CD4-positive, alpha-beta T cell (primary cell): ENCODE measurements at regions of chr15 and their contacts with region 1.

Region 1: DNA sequence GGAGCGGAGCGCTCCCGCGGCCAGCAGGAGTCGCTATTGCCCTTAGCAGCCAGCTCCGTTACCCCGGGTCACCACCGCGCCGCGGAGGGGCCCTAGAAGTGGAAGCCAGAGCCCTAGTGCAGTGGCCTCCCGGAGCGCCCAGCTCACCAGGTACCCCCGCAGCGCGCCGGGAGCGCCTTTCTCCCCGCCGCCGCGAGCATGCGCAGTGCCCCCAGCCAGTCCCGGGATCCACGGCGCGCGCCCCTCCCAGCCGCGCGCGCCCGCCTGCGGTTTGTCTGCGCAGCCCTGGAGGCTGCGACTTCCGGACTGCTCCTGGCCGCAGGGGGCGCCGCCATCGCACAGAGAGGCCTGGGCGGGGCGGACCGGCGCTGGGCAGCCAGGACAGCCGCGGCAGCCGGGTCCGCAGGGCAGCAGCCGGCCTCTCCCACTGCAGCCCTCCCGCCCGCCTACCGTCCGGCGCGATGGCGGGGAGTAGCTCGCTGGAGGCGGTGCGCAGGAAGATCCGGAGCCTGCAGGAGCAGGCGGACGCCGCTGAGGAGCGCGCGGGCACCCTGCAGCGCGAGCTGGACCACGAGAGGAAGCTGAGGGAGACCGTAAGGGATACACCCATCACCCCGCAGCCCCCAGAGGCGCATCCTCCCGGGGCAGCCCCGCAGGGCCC is 5.7 kb downstream of the TPM1 start:
- DNase-seq: peak; percentile 71 to 95 (median 79)
- ATAC-seq: peak; percentile 75
- H3K4me3 ChIP-seq: peak overlapping the region; percentile 72
- H3K4me3 Mint-ChIP-seq: peak overlapping the region; percentile 98
- H3K27ac ChIP-seq: peak overlapping the region in 1 of 2 donors; percentile 31
- H3K27ac Mint-ChIP-seq: peak overlapping the region; percentile 80
- H3K4me1 ChIP-seq: peaks cover 27% of the 10 kb centered on the region
- H3K4me1 Mint-ChIP-seq: peaks cover 35% of the 10 kb centered on the region
- H3K27me3 ChIP-seq: peaks cover 26 to 40% of the 10 kb centered on the region in 2 experiments
- H3K27me3 Mint-ChIP-seq: peaks cover 46% of the 10 kb centered on the region
- CTCF ChIP-seq: peak; percentile 96

Region 2: DNA sequence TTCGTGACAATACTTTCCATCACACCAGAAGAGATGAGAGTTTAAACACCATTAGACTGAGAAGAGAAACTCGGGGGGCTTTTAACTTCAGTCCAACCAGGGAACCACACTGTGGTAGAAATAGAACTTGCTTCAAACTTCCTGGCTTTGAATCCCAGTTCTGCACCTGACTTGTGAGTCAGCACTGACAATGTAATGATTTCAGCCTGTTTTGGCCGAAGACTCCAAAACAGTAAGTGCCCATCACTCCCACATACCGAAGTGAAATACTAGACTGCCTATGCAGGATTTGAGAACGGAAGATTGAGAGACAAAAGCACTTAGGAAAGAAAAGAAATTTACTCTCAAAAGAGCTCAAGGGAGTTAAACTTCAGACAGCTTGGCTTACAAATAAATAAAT is 910.1 kb before region 1 on chr15:
- CTCF ChIA-PET with region 1: no interaction called
- POLR2A ChIA-PET with region 1: no interaction called
- intact Hi-C with region 1: no loop called
- DNase-seq: no peak
- ATAC-seq: no peak
- H3K4me3 ChIP-seq: no peak overlapping the region
- H3K4me3 Mint-ChIP-seq: no peak overlapping the region
- H3K27ac ChIP-seq: no peak overlapping the region
- H3K27ac Mint-ChIP-seq: no peak overlapping the region
- H3K4me1 ChIP-seq: no peaks in the 10 kb centered on the region
- H3K4me1 Mint-ChIP-seq: no peaks in the 10 kb centered on the region
- H3K27me3 ChIP-seq: no peaks in the 10 kb centered on the region
- H3K27me3 Mint-ChIP-seq: no peaks in the 10 kb centered on the region
- CTCF ChIP-seq: no peak

Region 3: DNA sequence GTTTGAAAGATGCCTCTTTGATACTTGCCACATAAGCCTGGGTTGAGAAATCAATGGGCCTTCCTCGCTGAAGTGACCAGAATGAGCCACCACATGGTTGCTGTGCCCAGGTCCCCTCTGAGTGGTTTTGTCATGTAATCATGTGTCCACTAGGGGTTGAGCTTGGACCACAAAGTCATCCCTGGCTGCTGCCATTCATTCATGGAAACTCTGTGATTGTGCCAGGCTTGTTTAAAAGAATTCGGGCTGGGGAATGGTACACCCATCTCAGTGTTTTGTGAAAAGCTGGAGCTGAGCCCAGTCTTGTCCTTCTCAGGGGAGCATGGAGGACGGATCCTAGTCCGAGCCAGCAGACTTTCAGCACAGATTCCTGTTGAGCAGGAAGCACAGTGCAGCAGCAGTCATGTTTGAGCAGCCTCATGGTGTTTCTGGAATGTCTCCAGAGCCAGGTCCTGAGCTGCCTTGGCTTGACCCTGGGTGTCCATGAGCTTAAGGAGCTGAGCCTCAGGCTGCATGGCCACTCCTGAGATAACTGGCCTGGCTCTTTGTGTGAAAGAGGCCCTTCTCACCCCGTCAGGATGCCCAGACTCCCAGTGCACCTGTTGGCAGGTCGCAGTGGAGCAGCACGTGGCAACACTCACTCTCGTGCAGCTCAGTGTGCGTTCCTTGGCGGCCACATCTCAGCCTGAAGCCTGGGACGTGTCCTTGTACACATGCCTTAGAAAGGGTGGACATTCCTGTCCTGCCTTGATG is 266.0 kb before region 1 on chr15:
- CTCF ChIA-PET with region 1: no interaction called
- POLR2A ChIA-PET with region 1: no interaction called
- intact Hi-C with region 1: no loop called
- DNase-seq: peak in 3 of 14 experiments; percentile 7 to 33 (median 19)
- ATAC-seq: no peak
- H3K4me3 ChIP-seq: no peak overlapping the region
- H3K4me3 Mint-ChIP-seq: no peak overlapping the region
- H3K27ac ChIP-seq: no peak overlapping the region
- H3K27ac Mint-ChIP-seq: no peak overlapping the region
- H3K4me1 ChIP-seq: no peaks in the 10 kb centered on the region
- H3K4me1 Mint-ChIP-seq: no peaks in the 10 kb centered on the region
- H3K27me3 ChIP-seq: no peaks in the 10 kb centered on the region
- H3K27me3 Mint-ChIP-seq: peaks cover 3% of the 10 kb centered on the region
- CTCF ChIP-seq: no peak

Region 4: DNA sequence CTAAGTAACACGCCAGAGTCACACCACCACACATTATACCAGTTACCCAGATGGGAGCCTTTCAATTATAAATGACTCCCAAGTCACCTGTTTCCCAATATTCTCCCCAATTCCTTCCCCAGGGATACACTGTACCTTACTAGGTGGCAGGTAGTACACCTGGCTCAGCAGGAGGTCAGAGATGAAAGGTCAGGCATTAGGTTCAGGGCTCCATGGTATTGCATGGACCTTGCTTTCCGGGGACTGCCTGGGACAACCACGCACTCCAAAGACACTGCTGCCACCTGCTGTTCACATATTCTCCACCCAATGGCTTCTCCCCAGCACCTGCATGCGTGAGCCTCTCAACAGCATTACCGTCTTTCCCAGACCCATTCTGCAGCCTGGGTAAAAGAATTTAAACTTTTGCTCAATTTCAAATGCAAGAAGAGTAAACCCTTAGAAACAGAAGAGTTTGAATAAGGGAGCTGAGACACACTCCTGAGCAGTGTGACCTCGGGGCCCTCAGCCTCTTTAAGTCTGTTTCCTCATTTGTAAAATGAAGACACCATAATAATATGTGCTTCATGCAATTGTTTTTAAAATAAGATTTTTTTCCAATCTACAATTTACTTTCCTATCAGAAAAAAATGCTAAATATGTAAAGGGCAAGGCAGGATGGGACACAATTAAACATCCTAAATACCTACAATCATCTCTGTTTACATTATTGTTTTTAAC is 45.4 kb after region 1 on chr15:
- CTCF ChIA-PET with region 1: interaction called, 29 read pairs
- POLR2A ChIA-PET with region 1: interaction called, 5 read pairs
- intact Hi-C with region 1: loop called (anchors 1 kb)
- DNase-seq: peak; percentile 51 to 83 (median 65)
- ATAC-seq: peak; percentile 87
- H3K4me3 ChIP-seq: no peak overlapping the region
- H3K4me3 Mint-ChIP-seq: no peak overlapping the region
- H3K27ac ChIP-seq: no peak overlapping the region
- H3K27ac Mint-ChIP-seq: no peak overlapping the region
- H3K4me1 ChIP-seq: no peaks in the 10 kb centered on the region
- H3K4me1 Mint-ChIP-seq: no peaks in the 10 kb centered on the region
- H3K27me3 ChIP-seq: no peaks in the 10 kb centered on the region
- H3K27me3 Mint-ChIP-seq: no peaks in the 10 kb centered on the region
- CTCF ChIP-seq: peak; percentile 81

Region 5: DNA sequence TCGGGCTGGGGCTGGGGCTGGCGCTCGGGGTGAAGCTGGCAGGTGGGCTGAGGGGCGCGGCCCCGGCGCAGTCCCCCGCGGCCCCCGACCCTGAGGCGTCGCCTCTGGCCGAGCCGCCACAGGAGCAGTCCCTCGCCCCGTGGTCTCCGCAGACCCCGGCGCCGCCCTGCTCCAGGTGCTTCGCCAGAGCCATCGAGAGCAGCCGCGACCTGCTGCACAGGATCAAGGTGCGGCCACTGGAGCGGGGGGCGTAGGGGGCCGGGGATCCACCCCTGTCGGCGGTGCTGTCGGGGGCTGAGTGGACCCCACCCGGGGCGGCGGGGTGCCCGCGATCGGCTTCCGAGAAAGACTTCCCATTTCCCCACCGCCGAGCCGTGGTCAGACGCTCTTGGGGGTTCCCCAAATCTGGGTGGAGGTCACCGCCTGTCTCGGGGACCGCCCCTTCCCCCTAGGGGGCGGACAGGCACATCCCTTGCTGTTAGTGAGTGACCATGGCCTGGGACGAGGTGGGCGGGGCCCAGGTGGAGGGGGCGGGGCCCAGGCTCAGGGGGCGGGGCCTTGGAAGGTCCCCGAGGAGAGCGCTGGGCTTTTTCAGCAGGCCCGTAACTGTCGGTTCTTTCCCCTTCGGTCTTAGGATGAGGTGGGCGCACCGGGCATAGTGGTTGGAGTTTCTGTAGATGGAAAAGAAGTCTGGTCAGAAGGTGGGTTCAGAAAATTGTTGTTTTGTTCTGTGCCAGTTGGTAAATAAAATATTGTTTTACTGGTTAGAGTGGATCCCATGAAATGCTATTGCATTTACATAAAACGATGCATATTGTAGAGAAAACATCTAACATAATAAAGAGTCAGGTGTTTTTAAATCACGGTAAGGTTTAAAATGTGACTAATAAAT is 74.0 kb after region 1 on chr15:
- CTCF ChIA-PET with region 1: interaction called, 4 read pairs
- POLR2A ChIA-PET with region 1: no interaction called
- intact Hi-C with region 1: loop called in 1 of 2 experiments (anchors 2 kb)
- DNase-seq: peak; percentile 48 to 91 (median 65)
- ATAC-seq: peak; percentile 71
- H3K4me3 ChIP-seq: peak overlapping the region; percentile 90
- H3K4me3 Mint-ChIP-seq: peak overlapping the region; percentile 96
- H3K27ac ChIP-seq: peak overlapping the region; percentile 64 to 67
- H3K27ac Mint-ChIP-seq: peak overlapping the region; percentile 89
- H3K4me1 ChIP-seq: peaks cover 10% of the 10 kb centered on the region
- H3K4me1 Mint-ChIP-seq: peaks cover 17% of the 10 kb centered on the region
- H3K27me3 ChIP-seq: no peaks in the 10 kb centered on the region
- H3K27me3 Mint-ChIP-seq: no peaks in the 10 kb centered on the region
- CTCF ChIP-seq: no peak

Region 6: GRCh38 chr15:63157118-63157843 is 109.0 kb after region 1 on chr15 and contains the start of gene RPS27L:
- CTCF ChIA-PET with region 1: no interaction called
- POLR2A ChIA-PET with region 1: interaction called, 13 read pairs
- intact Hi-C with region 1: loop called in 1 of 2 experiments (anchors 5 kb)
- DNase-seq: peak; percentile 74 to 92 (median 86)
- ATAC-seq: peak; percentile 97
- H3K4me3 ChIP-seq: peak within 1 kb of the TSS; percentile 95
- H3K4me3 Mint-ChIP-seq: peak within 1 kb of the TSS; percentile 100
- H3K27ac ChIP-seq: peak within 1 kb of the TSS; percentile 53 to 70
- H3K27ac Mint-ChIP-seq: peak within 1 kb of the TSS; percentile 98
- H3K4me1 ChIP-seq: peaks cover 10% of the 10 kb centered on the region
- H3K4me1 Mint-ChIP-seq: peaks cover 36% of the 10 kb centered on the region
- H3K27me3 ChIP-seq: no peaks in the 10 kb centered on the region
- H3K27me3 Mint-ChIP-seq: no peaks in the 10 kb centered on the region
- CTCF ChIP-seq: no peak
- total RNA-seq, gene RPS27L: 40.0 to 43.1 TPM

Region 7: DNA sequence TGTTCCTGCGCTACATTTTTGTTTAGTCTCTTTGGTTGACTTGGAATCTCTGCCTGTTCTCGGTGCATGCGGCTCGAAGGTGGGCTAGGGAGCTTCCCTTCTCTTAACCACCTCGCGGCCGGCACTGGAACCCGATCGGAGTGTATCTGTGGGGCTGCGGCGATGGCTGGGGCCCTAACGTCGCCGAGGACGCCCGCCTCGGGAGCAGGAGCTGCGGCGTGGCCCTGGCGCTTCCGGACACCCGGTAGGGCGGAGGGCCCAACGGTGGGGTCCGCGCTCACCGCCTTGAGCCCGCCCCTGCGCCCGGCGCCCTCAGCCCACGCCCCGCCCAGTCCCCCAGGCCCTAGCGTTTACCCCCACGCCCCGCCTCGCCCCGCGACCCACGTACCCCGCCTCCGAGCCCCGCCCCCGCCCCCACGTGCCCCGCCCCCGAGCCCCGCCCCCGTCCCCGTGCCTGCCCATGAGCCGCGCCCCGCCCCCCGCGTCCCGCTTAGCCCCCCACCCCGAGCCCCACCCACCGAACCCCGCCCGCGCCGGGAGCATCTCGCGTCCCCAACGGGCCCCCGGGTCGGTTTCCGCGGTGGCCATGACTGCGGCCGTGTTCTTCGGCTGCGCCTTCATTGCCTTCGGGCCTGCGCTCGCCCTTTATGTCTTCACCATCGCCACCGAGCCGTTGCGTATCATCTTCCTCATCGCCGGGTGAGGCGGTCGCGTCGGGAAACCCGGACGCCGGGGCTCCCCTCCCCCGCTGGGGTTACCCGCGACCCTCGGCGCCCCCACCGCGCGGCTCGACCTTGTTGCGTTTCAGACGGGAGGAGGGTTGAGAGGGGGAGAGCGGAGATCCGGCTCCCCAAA is 229.0 kb after region 1 on chr15 and contains the start of gene APH1B:
- CTCF ChIA-PET with region 1: interaction called, 5 read pairs
- POLR2A ChIA-PET with region 1: no interaction called
- intact Hi-C with region 1: loop called (anchors 5 to 10 kb)
- DNase-seq: peak; percentile 61 to 94 (median 79)
- ATAC-seq: peak; percentile 88
- H3K4me3 ChIP-seq: peak within 1 kb of the TSS; percentile 86
- H3K4me3 Mint-ChIP-seq: peak within 1 kb of the TSS; percentile 91
- H3K27ac ChIP-seq: peak within 1 kb of the TSS; percentile 71 to 80
- H3K27ac Mint-ChIP-seq: peak within 1 kb of the TSS; percentile 82
- H3K4me1 ChIP-seq: peaks cover 25% of the 10 kb centered on the region
- H3K4me1 Mint-ChIP-seq: peaks cover 48% of the 10 kb centered on the region
- H3K27me3 ChIP-seq: no peaks in the 10 kb centered on the region
- H3K27me3 Mint-ChIP-seq: no peaks in the 10 kb centered on the region
- CTCF ChIP-seq: no peak
- total RNA-seq, gene APH1B: 9.3 to 11.6 TPM

Region 8: GRCh38 chr15:63402498-63403253 is 354.4 kb after region 1 on chr15:
- CTCF ChIA-PET with region 1: interaction called, 9 read pairs
- POLR2A ChIA-PET with region 1: interaction called, 5 read pairs
- intact Hi-C with region 1: loop called (anchors 1 kb)
- DNase-seq: peak in 3 of 14 experiments; percentile 57 to 58 (median 57)
- ATAC-seq: peak; percentile 62
- H3K4me3 ChIP-seq: no peak overlapping the region
- H3K4me3 Mint-ChIP-seq: no peak overlapping the region
- H3K27ac ChIP-seq: no peak overlapping the region
- H3K27ac Mint-ChIP-seq: no peak overlapping the region
- H3K4me1 ChIP-seq: no peaks in the 10 kb centered on the region
- H3K4me1 Mint-ChIP-seq: no peaks in the 10 kb centered on the region
- H3K27me3 ChIP-seq: peaks cover 0 to 3% of the 10 kb centered on the region in 2 experiments
- H3K27me3 Mint-ChIP-seq: no peaks in the 10 kb centered on the region
- CTCF ChIP-seq: peak; percentile 63

Region 9: GRCh38 chr15:63600616-63601025 is 552.4 kb after region 1 on chr15:
- CTCF ChIA-PET with region 1: no interaction called
- POLR2A ChIA-PET with region 1: no interaction called
- intact Hi-C with region 1: loop called in 1 of 2 experiments (anchors 10 kb)
- DNase-seq: peak; percentile 78 to 98 (median 88)
- ATAC-seq: peak; percentile 77
- H3K4me3 ChIP-seq: peak overlapping the region; percentile 79
- H3K4me3 Mint-ChIP-seq: peak overlapping the region; percentile 95
- H3K27ac ChIP-seq: peak overlapping the region; percentile 63 to 75
- H3K27ac Mint-ChIP-seq: peak overlapping the region; percentile 90
- H3K4me1 ChIP-seq: peaks cover 55% of the 10 kb centered on the region
- H3K4me1 Mint-ChIP-seq: peaks cover 73% of the 10 kb centered on the region
- H3K27me3 ChIP-seq: no peaks in the 10 kb centered on the region
- H3K27me3 Mint-ChIP-seq: no peaks in the 10 kb centered on the region
- CTCF ChIP-seq: no peak